Sigmoid colon (tissue), 7 donors: ENCODE measurements at regions of chr5 and their contacts with region 1.

Region 1: DNA sequence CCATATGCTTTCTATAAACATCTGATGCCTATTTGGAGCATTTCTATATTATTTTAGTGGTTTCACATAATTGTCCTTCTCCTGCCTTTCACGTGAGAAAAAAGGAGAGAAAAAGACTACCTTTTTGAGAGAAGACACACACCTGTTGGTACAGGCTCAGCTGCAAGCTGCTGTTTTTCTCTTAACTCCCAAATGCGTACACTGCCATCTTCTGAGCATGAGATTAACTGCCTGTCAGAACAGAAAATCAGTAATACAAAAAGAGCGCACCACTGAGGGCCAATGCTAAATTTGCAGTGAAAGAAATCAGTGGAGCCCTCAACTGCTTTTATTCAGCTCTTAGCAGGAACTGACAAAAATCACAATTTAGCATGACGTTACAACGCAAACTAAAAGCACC is 54.9 kb downstream of the WDR41 start:
- DNase-seq: no peak
- H3K4me3 ChIP-seq: no peak overlapping the region
- H3K27ac ChIP-seq: no peak overlapping the region
- H3K4me1 ChIP-seq: no peaks in the 10 kb centered on the region
- H3K27me3 ChIP-seq: no peaks in the 10 kb centered on the region
- CTCF ChIP-seq: peak in 1 of 4 experiments; percentile 27
- EP300 ChIP-seq: no peak
- POLR2A ChIP-seq: no peak

Region 2: GRCh38 chr5:77086689-77087483 is 350.3 kb before region 1 on chr5 and contains the start of gene ZBED3:
- intact Hi-C with region 1: loop called (anchors 5 kb)
- DNase-seq: peak; percentile 90
- H3K4me3 ChIP-seq: peak within 1 kb of the TSS; percentile 61 to 93 (median 84)
- H3K27ac ChIP-seq: peak within 1 kb of the TSS; percentile 89 to 97 (median 92)
- H3K4me1 ChIP-seq: peaks cover 0 to 24% (median 13%) of the 10 kb centered on the region in 4 donors
- H3K27me3 ChIP-seq: no peaks in the 10 kb centered on the region
- CTCF ChIP-seq: peak in 1 of 4 experiments; percentile 19
- EP300 ChIP-seq: no peak
- POLR2A ChIP-seq: no peak
- total RNA-seq, gene ZBED3: 7.7 to 14.6 (median 10.9) TPM

Region 3: GRCh38 chr5:77143998-77144836 is 293.0 kb before region 1 on chr5:
- intact Hi-C with region 1: loop called (anchors 1 kb)
- DNase-seq: peak; percentile 86
- H3K4me3 ChIP-seq: no peak overlapping the region
- H3K27ac ChIP-seq: no peak overlapping the region
- H3K4me1 ChIP-seq: no peaks in the 10 kb centered on the region
- H3K27me3 ChIP-seq: no peaks in the 10 kb centered on the region
- CTCF ChIP-seq: peak; percentile 31 to 82 (median 63)
- EP300 ChIP-seq: no peak
- POLR2A ChIP-seq: no peak

Region 4: GRCh38 chr5:77266291-77266690 is 170.9 kb before region 1 on chr5:
- intact Hi-C with region 1: no loop called
- DNase-seq: no peak
- H3K4me3 ChIP-seq: no peak overlapping the region
- H3K27ac ChIP-seq: no peak overlapping the region
- H3K4me1 ChIP-seq: peaks cover 0 to 16% (median 8%) of the 10 kb centered on the region in 4 donors
- H3K27me3 ChIP-seq: no peaks in the 10 kb centered on the region
- CTCF ChIP-seq: no peak
- EP300 ChIP-seq: no peak
- POLR2A ChIP-seq: no peak

Region 5: GRCh38 chr5:77590347-77590746 is 153.2 kb after region 1 on chr5:
- intact Hi-C with region 1: no loop called
- DNase-seq: no peak
- H3K4me3 ChIP-seq: no peak overlapping the region
- H3K27ac ChIP-seq: no peak overlapping the region
- H3K4me1 ChIP-seq: no peaks in the 10 kb centered on the region
- H3K27me3 ChIP-seq: no peaks in the 10 kb centered on the region
- CTCF ChIP-seq: no peak
- EP300 ChIP-seq: no peak
- POLR2A ChIP-seq: no peak